IMR-90 (cell line): ENCODE measurements at regions of chr21 and their contacts with region 1.

Region 1: GRCh38 chr21:34510148-34511142 is 1.6 kb downstream of the KCNE1 start:
- DNase-seq: peak; percentile 68
- ATAC-seq: peak; percentile 85
- H3K4me3 ChIP-seq: no peak overlapping the region
- H3K27ac ChIP-seq: no peak overlapping the region
- H3K4me1 ChIP-seq: peaks cover 1% of the 10 kb centered on the region; the same call in 1 of the 2 replicates
- H3K27me3 ChIP-seq: no peaks in the 10 kb centered on the region
- CTCF ChIP-seq: peak; percentile 92
- POLR2A ChIP-seq: peak; percentile 34; the same call in 1 of the 2 replicates
- RAD21 ChIP-seq: peak; percentile 95

Region 2: DNA sequence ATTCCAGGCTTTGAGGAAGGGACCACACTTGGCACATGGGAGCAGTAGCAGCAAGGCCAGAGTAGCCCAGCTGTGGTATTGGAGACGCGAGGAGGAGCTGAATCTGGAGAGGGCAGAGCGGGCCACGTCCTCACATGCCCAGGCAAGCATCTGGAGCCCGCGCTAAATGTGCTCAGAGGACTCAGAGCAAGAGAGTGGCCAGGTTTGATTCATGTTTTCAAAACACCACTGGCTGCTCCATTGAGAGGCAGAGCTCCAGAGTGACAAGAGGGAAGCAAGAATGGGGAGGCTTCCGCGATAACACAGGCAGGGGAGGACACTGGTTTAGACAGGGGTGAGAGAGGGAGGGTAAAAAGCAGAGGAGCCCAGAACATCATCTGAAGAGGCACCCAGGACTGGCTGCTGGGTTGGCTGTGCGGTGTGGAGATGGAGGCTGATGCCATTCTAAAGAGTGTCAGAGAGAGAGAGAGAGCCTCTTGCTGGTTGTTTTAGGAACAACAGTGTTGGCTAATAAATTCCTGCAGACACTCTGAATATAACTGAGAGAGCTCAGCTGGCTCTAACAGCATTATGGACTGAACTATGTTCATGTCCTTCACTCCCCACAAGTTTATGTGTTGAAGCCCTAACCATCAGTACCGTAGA is 72.2 kb after region 1 on chr21:
- CTCF ChIA-PET with region 1: interaction called, 25 read pairs
- POLR2A ChIA-PET with region 1: no interaction called
- dilution Hi-C with region 1: no loop called
- in situ Hi-C with region 1: no loop called
- intact Hi-C with region 1: loop called (anchors 1 kb)
- DNase-seq: peak; percentile 65
- ATAC-seq: peak; percentile 95
- H3K4me3 ChIP-seq: no peak overlapping the region
- H3K27ac ChIP-seq: no peak overlapping the region
- H3K4me1 ChIP-seq: peaks cover 9% of the 10 kb centered on the region
- H3K27me3 ChIP-seq: no peaks in the 10 kb centered on the region
- CTCF ChIP-seq: peak; percentile 75
- POLR2A ChIP-seq: no peak
- RAD21 ChIP-seq: peak; percentile 84

Region 3: DNA sequence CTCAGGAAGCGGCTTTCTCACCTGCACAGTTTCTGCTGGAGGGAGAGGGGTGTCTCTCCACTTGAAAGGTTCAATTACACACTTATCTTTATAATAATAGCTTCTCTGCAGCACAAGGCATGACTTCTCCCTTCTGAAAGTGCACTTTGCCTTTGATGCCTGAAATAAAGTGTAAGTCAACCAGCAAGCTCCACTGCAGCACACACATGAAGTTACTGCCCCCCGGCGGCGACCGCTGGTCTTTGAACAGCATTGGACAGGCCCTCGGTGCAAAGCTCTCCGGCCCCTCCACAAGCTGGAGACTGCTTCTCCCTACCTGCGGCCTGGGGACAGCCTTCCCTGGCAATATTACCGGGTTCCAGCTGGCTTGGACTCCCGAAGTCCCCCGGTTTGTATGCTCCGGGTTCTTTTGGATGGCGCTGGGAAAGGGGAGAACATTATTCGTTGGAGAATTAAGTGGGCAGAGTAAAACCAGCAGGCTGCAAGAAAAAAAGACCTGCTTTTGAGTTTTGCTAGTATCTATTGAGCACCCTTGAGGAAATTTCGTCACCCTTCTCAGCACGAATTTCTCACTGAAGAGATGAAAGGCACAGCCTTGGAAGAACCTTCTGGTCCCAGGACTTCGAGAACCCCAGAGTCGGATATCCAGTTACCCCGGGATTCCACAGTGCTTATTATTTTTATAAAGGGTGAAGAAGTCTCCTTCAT is 92.7 kb after region 1 on chr21:
- CTCF ChIA-PET with region 1: interaction called, 20 read pairs
- POLR2A ChIA-PET with region 1: interaction called, 3 read pairs
- dilution Hi-C with region 1: no loop called
- in situ Hi-C with region 1: no loop called
- intact Hi-C with region 1: loop called (anchors 1 kb)
- DNase-seq: peak; percentile 70
- ATAC-seq: peak; percentile 99
- H3K4me3 ChIP-seq: no peak overlapping the region
- H3K27ac ChIP-seq: no peak overlapping the region
- H3K4me1 ChIP-seq: no peaks in the 10 kb centered on the region
- H3K27me3 ChIP-seq: no peaks in the 10 kb centered on the region
- CTCF ChIP-seq: peak; percentile 90
- POLR2A ChIP-seq: no peak
- RAD21 ChIP-seq: peak; percentile 96